ENCODE measurements at regions of chr3 and their contacts with region 1.

Region 1: DNA sequence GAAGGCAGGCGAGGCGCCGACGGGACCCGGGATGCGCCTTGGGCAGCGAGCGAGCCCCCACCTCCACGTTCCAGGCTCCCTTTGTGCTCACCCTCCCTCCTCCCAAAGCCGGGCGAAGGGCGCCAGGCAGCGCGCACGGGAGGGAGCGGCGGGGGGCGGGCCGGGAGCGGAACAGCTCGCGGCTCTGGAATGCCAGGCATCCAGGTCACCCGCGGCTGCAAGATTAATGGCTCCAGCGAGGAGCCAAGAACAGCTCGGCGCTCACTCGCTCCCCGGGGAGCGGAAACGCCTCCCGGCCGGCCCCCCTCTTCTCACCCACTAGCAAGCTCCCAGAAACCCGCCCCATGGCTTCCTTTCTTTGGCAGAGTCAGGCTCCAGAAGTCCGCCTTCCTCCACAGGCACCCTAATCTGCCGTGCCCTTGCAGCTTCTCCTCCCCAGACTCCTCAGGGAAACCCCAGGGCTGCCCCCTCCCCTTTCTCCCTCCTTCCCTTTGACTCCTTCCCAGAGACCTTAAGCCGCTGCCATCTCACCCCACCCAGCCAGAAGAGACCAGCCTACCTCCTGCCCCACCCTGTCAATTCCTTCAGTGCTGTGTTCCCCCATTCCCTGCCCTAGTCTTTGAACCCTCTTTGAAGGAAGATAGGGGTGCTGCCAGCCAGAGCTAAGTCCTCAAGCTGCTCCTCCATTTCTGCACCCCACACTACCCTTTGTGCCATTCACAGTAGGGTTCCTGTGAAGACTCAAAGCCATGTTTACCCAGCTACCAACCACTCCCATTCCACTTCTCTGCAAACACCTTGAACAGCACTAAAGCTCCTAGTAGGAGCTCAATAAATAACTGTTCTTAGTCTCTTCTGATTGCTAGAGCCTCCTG is 9.9 kb downstream of the AMOTL2 start:
- DNase-seq: peak; percentile 88 to 92
- H3K4me3 ChIP-seq: peak overlapping the region in 3 of 4 experiments; percentile 1 to 44 (median 42); a peak in 5 of 8 replicates
- H3K27ac ChIP-seq: peak overlapping the region; percentile 77
- H3K4me1 ChIP-seq: peaks cover 18 to 29% (median 26%) of the 10 kb centered on the region in 4 experiments
- H3K27me3 ChIP-seq: no peaks in the 10 kb centered on the region; a peak in 1 of 7 replicates
- CTCF ChIP-seq: no peak
- EP300 ChIP-seq: peak; percentile 83 to 88; a peak in 2 of 3 replicates
- POLR2A ChIP-seq: peak in 1 of 2 experiments; percentile 83; a peak in 2 of 3 replicates
- RAD21 ChIP-seq: no peak; a peak in 1 of 4 replicates

Region 2: GRCh38 chr3:134287512-134287911 is 76.8 kb before region 1 on chr3:
- CTCF ChIA-PET with region 1: no interaction called
- POLR2A ChIA-PET with region 1: no interaction called
- DNase-seq: peak in 1 of 2 experiments; percentile 14
- H3K4me3 ChIP-seq: no peak overlapping the region
- H3K27ac ChIP-seq: no peak overlapping the region
- H3K4me1 ChIP-seq: no peaks in the 10 kb centered on the region
- H3K27me3 ChIP-seq: no peaks in the 10 kb centered on the region
- CTCF ChIP-seq: no peak
- EP300 ChIP-seq: no peak
- POLR2A ChIP-seq: no peak
- RAD21 ChIP-seq: no peak

Region 3: GRCh38 chr3:134449277-134449676 is 85.0 kb after region 1 on chr3:
- CTCF ChIA-PET with region 1: interaction called, 11 read pairs
- POLR2A ChIA-PET with region 1: interaction called, 94 read pairs
- DNase-seq: peak in 1 of 2 experiments; percentile 59
- H3K4me3 ChIP-seq: no peak overlapping the region
- H3K27ac ChIP-seq: no peak overlapping the region
- H3K4me1 ChIP-seq: peaks cover 0 to 3% (median 2%) of the 10 kb centered on the region in 4 experiments; a peak in 4 of 7 replicates
- H3K27me3 ChIP-seq: peaks cover 0 to 4% (median 0%) of the 10 kb centered on the region in 4 experiments; a peak in 2 of 7 replicates
- CTCF ChIP-seq: peak; percentile 45 to 73 (median 59)
- EP300 ChIP-seq: no peak
- POLR2A ChIP-seq: no peak
- RAD21 ChIP-seq: peak; percentile 62 to 75

Region 4: DNA sequence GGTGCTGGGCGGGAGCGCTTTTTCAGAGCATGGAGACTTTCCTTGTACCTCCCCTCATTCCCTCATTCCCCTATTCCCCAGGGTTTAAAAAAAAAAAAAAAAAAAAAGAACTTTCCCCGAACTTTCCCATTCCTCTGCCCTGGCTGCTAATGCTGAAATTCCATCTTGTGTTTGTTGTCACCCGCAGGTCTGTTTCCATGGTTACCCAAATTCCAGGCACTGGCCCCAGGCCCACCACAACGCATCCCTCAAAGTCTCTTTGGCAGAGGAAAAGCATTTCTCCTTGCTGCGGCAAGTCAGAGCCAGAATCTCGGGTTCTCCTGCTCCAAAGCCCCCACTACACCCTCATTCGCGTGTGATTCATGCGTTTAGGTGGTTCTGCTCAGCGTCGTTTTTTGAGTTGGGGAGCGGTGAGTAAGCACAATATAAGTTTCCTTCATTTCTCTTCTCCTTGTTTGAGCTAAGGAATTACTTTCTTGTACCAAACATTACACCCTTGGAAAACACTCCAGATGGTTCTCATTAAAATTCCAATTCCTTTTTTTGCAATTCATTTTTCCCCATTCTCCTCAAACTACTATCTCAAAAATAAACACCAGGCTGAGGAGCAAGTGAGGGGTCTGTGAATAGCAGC is 99.9 kb after region 1 on chr3:
- CTCF ChIA-PET with region 1: interaction called, 5 read pairs
- POLR2A ChIA-PET with region 1: interaction called, 23 read pairs
- DNase-seq: peak; percentile 73 to 79
- H3K4me3 ChIP-seq: peak overlapping the region in 1 of 4 experiments; percentile 39; a peak in 5 of 8 replicates
- H3K27ac ChIP-seq: peak overlapping the region; percentile 71
- H3K4me1 ChIP-seq: peaks cover 5 to 16% (median 8%) of the 10 kb centered on the region in 4 experiments
- H3K27me3 ChIP-seq: no peaks in the 10 kb centered on the region
- CTCF ChIP-seq: no peak
- EP300 ChIP-seq: peak; percentile 56 to 97
- POLR2A ChIP-seq: peak; percentile 68 to 89
- RAD21 ChIP-seq: 0 out of 4 replicates have a peak, but pooled peaks of 1 of the 2 experiments have one; percentile 4